ENCODE measurements at regions of chr2 and their contacts with region 1.

Region 1: DNA sequence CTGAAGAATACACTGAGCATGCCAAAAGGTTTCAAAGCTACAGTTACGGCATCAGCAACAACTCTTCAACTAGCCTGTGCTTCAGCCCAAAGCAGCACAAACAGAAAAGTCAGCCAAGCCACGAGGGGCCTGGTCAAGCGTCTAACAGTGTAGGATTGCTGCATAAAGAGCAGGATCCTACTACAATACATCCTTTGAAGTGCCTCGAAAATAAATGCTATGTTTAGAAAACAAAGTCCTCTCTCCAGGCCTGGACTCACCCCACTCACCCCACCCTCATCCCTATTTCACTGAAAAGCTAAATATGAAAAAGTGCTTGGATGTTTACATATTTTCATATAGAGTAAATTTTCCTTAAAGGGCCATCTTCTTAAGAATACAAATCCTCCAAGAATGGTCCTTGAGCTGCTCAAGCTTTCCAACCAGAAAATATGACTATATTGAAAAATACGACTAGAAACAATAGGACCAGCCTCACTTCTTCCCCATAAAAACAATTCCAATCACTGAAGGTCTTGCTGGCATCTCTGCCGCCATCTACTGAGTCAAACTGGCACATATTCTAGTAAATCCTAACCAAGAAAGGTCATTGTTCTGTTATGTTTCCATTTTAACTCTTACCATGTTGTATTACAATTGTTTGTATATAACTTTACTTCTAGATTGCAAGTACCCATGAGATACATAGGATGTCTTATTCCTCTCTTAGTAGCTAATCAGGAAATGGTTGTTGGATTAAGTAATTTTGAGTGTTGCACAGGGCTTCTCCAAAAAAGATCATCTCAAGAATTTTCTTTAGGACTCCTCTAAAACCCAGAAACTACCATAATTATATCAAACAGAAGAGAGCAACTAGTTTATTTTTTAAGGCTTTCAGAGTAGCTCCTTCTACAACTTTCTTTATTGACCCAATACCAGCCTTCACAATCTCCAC is 63.6 kb downstream of the CLHC1 start:
- DNase-seq: peak in 2 of 4 experiments; percentile 53 to 67
- ATAC-seq: peak; percentile 63
- H3K4me3 ChIP-seq: no peak overlapping the region
- H3K27ac ChIP-seq: no peak overlapping the region; the same call in 2 of the 3 replicates
- H3K4me1 ChIP-seq: peaks cover 4 to 19% of the 10 kb centered on the region in 2 experiments; a peak in 3 of 5 replicates
- H3K27me3 ChIP-seq: no peaks in the 10 kb centered on the region
- CTCF ChIP-seq: peak; percentile 65 to 84 (median 65)
- EP300 ChIP-seq: no peak
- POLR2A ChIP-seq: no peak
- RAD21 ChIP-seq: peak; percentile 92 to 94

Region 2: GRCh38 chr2:54520687-54521086 is 647.8 kb before region 1 on chr2:
- CTCF ChIA-PET with region 1: no interaction called
- POLR2A ChIA-PET with region 1: no interaction called
- in situ Hi-C with region 1: no loop called
- intact Hi-C with region 1: no loop called
- DNase-seq: no peak
- ATAC-seq: no peak
- H3K4me3 ChIP-seq: no peak overlapping the region
- H3K27ac ChIP-seq: no peak overlapping the region
- H3K4me1 ChIP-seq: 0 out of 5 replicates have a peak, but pooled peaks cover 0 to 6% of the 10 kb centered on the region in 2 experiments
- H3K27me3 ChIP-seq: peaks cover 17 to 21% of the 10 kb centered on the region in 2 experiments; a peak in 3 of 5 replicates
- CTCF ChIP-seq: no peak
- EP300 ChIP-seq: no peak
- POLR2A ChIP-seq: no peak
- RAD21 ChIP-seq: no peak

Region 3: DNA sequence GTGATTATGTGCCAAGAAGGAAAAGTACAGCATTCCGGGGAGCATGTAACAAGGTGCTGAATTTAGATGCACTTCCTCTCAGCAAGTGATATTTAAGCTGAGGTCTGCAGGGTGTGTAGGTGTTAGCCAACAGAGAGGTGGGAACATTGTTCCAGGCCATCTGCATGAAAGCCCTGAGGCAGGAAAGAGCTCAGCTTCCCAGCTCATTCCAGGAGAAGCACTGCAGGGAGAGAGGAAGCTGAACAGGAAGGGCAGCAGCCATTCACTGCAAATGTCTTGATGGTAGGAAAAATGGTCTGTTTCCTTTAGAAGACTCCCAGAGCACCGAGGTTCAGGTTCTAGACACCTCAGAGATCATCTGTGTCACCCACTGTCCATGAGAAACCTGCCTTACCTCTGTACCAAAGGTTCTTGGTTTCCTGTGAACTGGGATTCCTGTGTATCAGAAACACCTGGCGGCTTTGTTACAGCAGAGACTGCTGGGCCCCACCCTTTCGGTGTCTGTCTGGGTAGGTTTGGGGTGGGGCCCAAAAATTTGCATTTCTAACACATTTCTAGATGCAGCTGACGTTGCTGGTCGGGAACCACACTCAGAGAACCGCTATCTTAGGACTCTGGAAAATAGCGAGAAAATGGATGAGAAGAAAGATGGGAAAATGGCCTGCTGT is 202.2 kb before region 1 on chr2:
- CTCF ChIA-PET with region 1: no interaction called
- POLR2A ChIA-PET with region 1: no interaction called
- in situ Hi-C with region 1: no loop called
- intact Hi-C with region 1: loop called (anchors 5 kb)
- DNase-seq: no peak
- ATAC-seq: peak; percentile 17
- H3K4me3 ChIP-seq: no peak overlapping the region
- H3K27ac ChIP-seq: no peak overlapping the region
- H3K4me1 ChIP-seq: peaks cover 4 to 7% of the 10 kb centered on the region in 2 experiments; a peak in 3 of 5 replicates
- H3K27me3 ChIP-seq: no peaks in the 10 kb centered on the region
- CTCF ChIP-seq: no peak
- EP300 ChIP-seq: no peak
- POLR2A ChIP-seq: no peak
- RAD21 ChIP-seq: no peak

Region 4: GRCh38 chr2:55063713-55064323 is 104.7 kb before region 1 on chr2:
- CTCF ChIA-PET with region 1: no interaction called
- POLR2A ChIA-PET with region 1: no interaction called
- in situ Hi-C with region 1: no loop called
- intact Hi-C with region 1: loop called (anchors 1 kb)
- DNase-seq: peak in 1 of 4 experiments; percentile 32
- ATAC-seq: peak; percentile 86
- H3K4me3 ChIP-seq: no peak overlapping the region
- H3K27ac ChIP-seq: no peak overlapping the region
- H3K4me1 ChIP-seq: peaks cover 15 to 21% of the 10 kb centered on the region in 2 experiments; a peak in 3 of 5 replicates
- H3K27me3 ChIP-seq: no peaks in the 10 kb centered on the region
- CTCF ChIP-seq: peak; percentile 39 to 58 (median 39); a peak in 3 of 6 replicates
- EP300 ChIP-seq: no peak
- POLR2A ChIP-seq: no peak
- RAD21 ChIP-seq: peak; percentile 40 to 64; a peak in 3 of 4 replicates

Region 5: DNA sequence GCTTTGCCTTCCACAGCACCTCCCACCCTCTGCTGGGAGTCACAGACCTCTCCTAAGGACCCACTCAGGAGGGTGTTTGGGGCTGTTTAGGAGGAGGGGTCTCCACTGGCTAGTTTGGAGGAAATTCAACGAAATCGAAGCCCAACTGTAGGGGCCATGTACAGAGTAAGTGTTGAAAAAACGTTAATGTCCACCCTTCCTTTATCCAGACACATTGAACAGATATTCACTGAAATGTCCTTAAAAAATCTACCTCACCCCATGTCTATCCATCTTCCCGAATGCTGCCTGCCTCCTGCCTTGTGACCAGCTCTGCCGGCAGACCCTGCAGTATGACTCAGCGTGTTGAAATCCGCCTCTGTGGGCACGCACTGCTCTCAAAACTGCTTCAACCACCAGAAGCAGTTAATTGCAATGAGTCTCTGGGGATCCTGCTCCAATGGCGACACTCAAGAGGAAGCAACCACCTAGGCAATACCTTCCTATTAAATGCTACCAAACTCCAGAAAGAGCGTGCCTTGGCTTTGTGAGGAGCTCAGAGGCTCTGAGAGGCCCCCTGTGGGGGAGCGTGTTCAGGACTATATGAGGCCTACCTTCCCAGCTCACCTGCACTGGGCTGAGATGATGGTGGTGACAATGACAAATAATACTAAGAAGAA is 56.8 kb before region 1 on chr2:
- CTCF ChIA-PET with region 1: no interaction called
- POLR2A ChIA-PET with region 1: interaction called, 3 read pairs
- in situ Hi-C with region 1: no loop called
- intact Hi-C with region 1: loop called (anchors 5 kb)
- DNase-seq: peak; percentile 46 to 87 (median 50)
- ATAC-seq: peak; percentile 62
- H3K4me3 ChIP-seq: no peak overlapping the region
- H3K27ac ChIP-seq: peak overlapping the region; percentile 78
- H3K4me1 ChIP-seq: peaks cover 20 to 71% of the 10 kb centered on the region in 2 experiments
- H3K27me3 ChIP-seq: no peaks in the 10 kb centered on the region
- CTCF ChIP-seq: no peak
- EP300 ChIP-seq: peak; percentile 52
- POLR2A ChIP-seq: peak; percentile 55
- RAD21 ChIP-seq: peak in 1 of 2 experiments; percentile 13; a peak in 2 of 4 replicates

Measured in K562 (cell line).